PC-9 (cell line): ENCODE measurements at regions of chr22 and their contacts with region 1.

Region 1: GRCh38 chr22:33380789-33381530 is 322.8 kb upstream of the SYN3 start:
- DNase-seq: peak in 1 of 2 experiments; percentile 65
- H3K4me3 ChIP-seq: no peak overlapping the region
- H3K27ac ChIP-seq: no peak overlapping the region
- H3K4me1 ChIP-seq: no peaks in the 10 kb centered on the region
- H3K27me3 ChIP-seq: no peaks in the 10 kb centered on the region
- CTCF ChIP-seq: no peak

Region 2: DNA sequence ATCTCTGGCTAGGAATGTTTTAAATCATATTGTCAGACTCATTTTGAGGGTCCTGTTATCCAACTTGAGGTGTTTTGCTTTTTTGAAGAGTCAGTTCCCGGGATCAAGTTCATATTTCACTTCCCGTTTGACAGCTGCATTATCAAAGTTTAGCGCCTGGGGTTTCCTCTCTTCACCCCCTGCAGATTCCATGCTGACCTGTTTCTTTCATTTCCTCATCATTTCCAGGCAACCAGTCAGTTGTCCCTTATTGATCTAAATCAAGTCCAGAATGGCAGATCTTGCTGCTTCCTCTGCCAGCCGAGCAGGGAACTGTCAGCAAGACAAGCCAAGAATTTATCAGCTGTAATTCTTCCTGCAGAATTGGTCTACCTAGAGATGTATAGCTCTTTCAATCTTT is 125.2 kb before region 1 on chr22:
- CTCF ChIA-PET with region 1: no interaction called
- POLR2A ChIA-PET with region 1: no interaction called
- intact Hi-C with region 1: no loop called
- DNase-seq: no peak
- H3K4me3 ChIP-seq: no peak overlapping the region
- H3K27ac ChIP-seq: no peak overlapping the region
- H3K4me1 ChIP-seq: no peaks in the 10 kb centered on the region
- H3K27me3 ChIP-seq: peaks cover 55% of the 10 kb centered on the region
- CTCF ChIP-seq: no peak

Region 3: GRCh38 chr22:33332538-33332937 is 48.4 kb before region 1 on chr22:
- CTCF ChIA-PET with region 1: no interaction called
- POLR2A ChIA-PET with region 1: no interaction called
- intact Hi-C with region 1: no loop called
- DNase-seq: no peak
- H3K4me3 ChIP-seq: no peak overlapping the region
- H3K27ac ChIP-seq: no peak overlapping the region
- H3K4me1 ChIP-seq: no peaks in the 10 kb centered on the region
- H3K27me3 ChIP-seq: no peaks in the 10 kb centered on the region
- CTCF ChIP-seq: no peak

Region 4: DNA sequence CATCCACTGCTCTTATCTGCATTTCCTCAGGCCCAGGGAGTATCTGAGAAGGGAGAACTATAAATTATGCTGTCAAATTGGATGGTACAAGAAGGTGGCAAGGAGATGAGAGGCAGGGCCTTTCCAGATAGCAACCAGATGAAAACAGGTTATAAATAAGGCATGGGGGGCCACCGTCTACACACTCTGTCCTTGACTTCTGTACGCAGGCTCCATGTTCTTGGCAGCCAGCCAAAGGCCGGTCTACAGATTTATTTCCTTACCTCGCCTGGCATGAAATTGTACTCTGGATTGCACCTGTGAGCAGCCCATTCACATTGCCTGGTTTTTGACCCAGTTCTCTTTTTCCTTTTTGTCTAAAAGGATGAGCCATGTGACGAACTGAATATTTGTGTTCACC is 696.4 kb after region 1 on chr22:
- CTCF ChIA-PET with region 1: interaction called, 13 read pairs
- POLR2A ChIA-PET with region 1: no interaction called
- intact Hi-C with region 1: no loop called
- DNase-seq: no peak
- H3K4me3 ChIP-seq: no peak overlapping the region
- H3K27ac ChIP-seq: no peak overlapping the region
- H3K4me1 ChIP-seq: no peaks in the 10 kb centered on the region
- H3K27me3 ChIP-seq: no peaks in the 10 kb centered on the region
- CTCF ChIP-seq: no peak